ENCODE measurements at regions of chr1 and their contacts with region 1.

Region 1: GRCh38 chr1:204446370-204447111 is 34.9 kb upstream of the PPP1R15B start:
- DNase-seq: peak; percentile 87
- ATAC-seq: peak; percentile 91
- H3K4me3 Mint-ChIP-seq: no peak overlapping the region
- H3K27ac Mint-ChIP-seq: peak overlapping the region; percentile 69
- H3K4me1 Mint-ChIP-seq: peaks cover 16% of the 10 kb centered on the region
- H3K27me3 Mint-ChIP-seq: no peaks in the 10 kb centered on the region
- CTCF ChIP-seq: peak; percentile 66

Region 2: DNA sequence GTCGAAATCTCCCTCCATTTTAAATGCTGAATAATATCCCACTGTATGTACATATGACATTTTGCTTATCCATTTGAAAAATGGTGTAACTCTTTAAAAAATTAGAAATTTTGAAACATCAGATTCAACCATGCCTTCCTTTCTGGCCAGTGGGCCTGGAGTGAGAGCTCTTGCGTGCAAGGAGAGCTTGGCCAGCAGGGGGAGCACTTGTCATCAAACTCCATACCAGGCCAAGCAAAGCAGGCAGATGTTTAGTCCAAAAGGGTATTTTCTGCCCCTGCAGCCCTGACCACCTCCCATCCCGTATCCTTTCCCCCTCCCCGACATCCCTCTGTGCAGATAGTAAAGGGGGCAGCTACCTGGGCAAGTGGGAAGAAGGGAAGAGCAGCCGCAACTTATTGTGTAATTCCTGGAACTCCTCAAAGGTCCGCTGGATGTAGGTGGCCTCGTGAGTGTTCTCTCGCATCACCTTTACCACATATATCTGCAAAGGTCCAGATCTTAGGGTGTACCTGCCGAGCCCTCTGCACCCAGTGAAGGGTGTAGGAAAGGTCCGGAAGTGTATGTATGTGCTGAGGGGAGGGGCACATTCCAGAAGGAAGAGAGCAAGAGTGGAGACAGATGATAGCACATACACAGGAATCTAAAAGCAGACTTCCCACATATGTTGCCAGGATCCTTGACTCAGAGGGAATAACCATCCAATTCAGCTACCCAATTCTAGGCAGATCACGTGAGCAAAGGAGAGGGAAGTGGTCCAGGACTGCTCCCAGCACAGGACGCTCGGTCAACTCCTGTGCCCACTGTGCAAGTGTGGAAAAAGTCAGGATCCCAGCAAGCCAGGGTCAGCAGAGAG is 15.0 kb before region 1 on chr1:
- CTCF ChIA-PET with region 1: interaction called, 128 read pairs
- POLR2A ChIA-PET with region 1: interaction called, 4 read pairs
- intact Hi-C with region 1: no loop called
- DNase-seq: peak; percentile 91
- ATAC-seq: peak; percentile 89
- H3K4me3 Mint-ChIP-seq: no peak overlapping the region
- H3K27ac Mint-ChIP-seq: no peak overlapping the region
- H3K4me1 Mint-ChIP-seq: peaks cover 3% of the 10 kb centered on the region
- H3K27me3 Mint-ChIP-seq: no peaks in the 10 kb centered on the region
- CTCF ChIP-seq: peak; percentile 91

Region 3: DNA sequence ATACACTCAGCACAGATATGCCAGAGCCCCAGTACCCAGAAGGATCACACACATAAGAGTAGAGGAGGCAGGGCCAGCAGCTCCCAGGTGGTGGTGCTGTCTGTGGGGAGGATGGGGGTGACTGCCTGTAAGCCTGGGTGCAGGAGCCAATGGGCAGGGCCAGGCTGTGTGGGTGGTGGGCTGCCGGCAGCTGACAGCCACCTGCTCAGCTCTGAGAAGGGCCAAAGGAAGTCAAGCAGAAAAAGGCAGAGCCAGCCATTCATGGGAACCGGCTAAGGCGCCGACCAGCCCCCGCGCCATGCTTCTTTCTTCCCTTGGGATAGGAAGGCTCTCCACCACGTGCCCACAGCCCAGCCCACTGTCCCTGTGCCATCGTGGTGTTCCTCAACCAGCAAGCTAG is 34.0 kb after region 1 on chr1:
- CTCF ChIA-PET with region 1: interaction called, 24 read pairs
- POLR2A ChIA-PET with region 1: interaction called, 3 read pairs
- intact Hi-C with region 1: no loop called
- DNase-seq: peak; percentile 40
- ATAC-seq: peak; percentile 69
- H3K4me3 Mint-ChIP-seq: no peak overlapping the region
- H3K27ac Mint-ChIP-seq: no peak overlapping the region
- H3K4me1 Mint-ChIP-seq: peaks cover 55% of the 10 kb centered on the region
- H3K27me3 Mint-ChIP-seq: no peaks in the 10 kb centered on the region
- CTCF ChIP-seq: no peak

Region 4: DNA sequence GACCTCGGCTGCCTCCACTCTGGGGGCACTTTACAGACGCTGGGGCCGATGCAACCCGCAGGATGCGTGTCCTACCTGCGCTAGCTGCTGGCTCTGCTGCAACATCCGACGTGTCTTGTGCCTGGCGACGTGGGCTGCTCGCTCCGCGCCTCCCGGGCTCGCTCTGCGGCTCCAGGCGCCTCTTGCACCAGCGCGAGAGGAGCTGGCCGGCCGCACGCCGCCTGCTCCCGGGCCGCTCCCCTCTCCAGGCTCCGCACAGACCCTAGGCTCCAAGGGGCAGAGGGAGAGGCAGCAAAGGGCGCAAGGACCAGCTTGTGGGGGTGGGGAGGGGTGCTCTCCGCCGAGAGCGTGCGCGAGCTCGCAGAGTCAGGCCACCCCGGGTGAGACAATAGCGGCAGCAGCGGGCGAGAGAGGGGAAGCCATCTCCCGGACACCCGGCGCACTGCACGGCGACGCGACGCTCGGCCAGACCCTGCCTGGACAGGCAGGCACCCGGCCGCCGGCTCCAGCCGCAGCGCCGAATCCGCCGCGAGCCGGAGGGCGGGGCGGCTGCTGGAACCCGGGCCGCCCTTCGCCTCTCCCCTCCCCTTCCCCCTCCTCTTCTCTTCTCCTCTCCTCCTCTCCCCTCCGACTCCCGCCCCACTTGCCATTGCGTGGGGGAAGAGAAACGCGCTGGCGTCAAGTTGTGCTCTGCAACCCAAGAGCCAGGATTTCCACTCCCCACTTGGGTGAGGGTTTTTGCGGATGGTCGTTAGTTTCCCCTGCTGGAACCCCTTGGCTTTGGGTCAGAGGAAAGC is 47.9 kb after region 1 on chr1 and contains the start of gene PIK3C2B:
- CTCF ChIA-PET with region 1: interaction called, 1,122 read pairs
- POLR2A ChIA-PET with region 1: interaction called, 14 read pairs
- intact Hi-C with region 1: no loop called
- DNase-seq: peak; percentile 81
- ATAC-seq: peak; percentile 80
- H3K4me3 Mint-ChIP-seq: peak within 1 kb of the TSS; percentile 88
- H3K27ac Mint-ChIP-seq: peak within 1 kb of the TSS; percentile 94
- H3K4me1 Mint-ChIP-seq: peaks cover 46% of the 10 kb centered on the region
- H3K27me3 Mint-ChIP-seq: no peaks in the 10 kb centered on the region
- CTCF ChIP-seq: peak; percentile 58
- total RNA-seq, gene PIK3C2B: 26.6 to 28.9 TPM

Region 5: DNA sequence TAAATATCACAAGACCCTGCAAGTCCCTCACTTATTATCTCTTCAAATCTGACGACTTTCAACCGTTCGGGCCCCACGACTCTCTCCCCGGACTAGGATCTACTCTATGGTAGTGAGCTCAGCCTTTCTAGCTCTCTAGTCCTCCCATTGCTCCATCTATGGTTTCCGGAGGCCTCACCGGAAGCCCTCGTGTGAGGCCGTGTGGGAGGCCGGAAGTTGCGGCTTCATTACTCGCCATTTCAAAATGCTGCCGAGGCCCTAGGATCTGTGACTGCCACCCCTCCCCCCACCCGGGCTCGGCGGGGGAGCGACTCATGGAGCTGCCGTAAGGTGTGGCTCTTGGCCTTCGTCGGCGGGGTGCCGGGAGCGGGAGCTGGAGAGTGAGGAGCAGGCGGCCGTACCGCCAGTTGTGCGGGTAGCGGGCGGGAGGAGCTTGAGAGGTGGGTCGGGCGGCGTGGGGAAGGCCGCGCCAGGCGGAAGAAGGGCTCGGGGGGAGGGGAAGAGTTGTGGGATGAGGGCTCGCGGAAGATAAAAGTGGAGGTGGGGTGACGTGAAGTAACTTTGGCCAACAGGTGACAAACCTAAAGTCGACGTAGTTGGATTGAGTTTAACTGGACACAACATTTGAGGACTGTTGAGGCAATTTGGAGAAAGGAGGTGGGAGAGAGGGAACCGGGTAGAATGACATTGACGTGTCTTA is 69.8 kb after region 1 on chr1 and contains the start of gene MDM4:
- CTCF ChIA-PET with region 1: interaction called, 12 read pairs
- POLR2A ChIA-PET with region 1: interaction called, 4 read pairs
- intact Hi-C with region 1: no loop called
- DNase-seq: peak; percentile 98
- ATAC-seq: peak; percentile 88
- H3K4me3 Mint-ChIP-seq: no peak within 1 kb of the TSS
- H3K27ac Mint-ChIP-seq: no peak within 1 kb of the TSS
- H3K4me1 Mint-ChIP-seq: peaks cover 55% of the 10 kb centered on the region
- H3K27me3 Mint-ChIP-seq: no peaks in the 10 kb centered on the region
- CTCF ChIP-seq: no peak
- total RNA-seq, gene MDM4: 89.6 to 94.8 TPM